ENCODE measurements at regions of chr20 and their contacts with region 1.

Region 1: GRCh38 chr20:38779247-38780097 is 26.0 kb upstream of the PPP1R16B start:
- DNase-seq: no peak
- H3K4me3 ChIP-seq: no peak overlapping the region
- H3K27ac ChIP-seq: no peak overlapping the region
- H3K4me1 ChIP-seq: no peaks in the 10 kb centered on the region
- H3K27me3 ChIP-seq: no peaks in the 10 kb centered on the region
- CTCF ChIP-seq: no peak

Region 2: GRCh38 chr20:38805502-38805957 is 26.1 kb after region 1 on chr20 and contains the start of gene PPP1R16B:
- CTCF ChIA-PET with region 1: no interaction called
- POLR2A ChIA-PET with region 1: interaction called, 23 read pairs
- intact Hi-C with region 1: no loop called
- DNase-seq: peak; percentile 42
- H3K4me3 ChIP-seq: peak within 1 kb of the TSS; percentile 41
- H3K27ac ChIP-seq: no peak within 1 kb of the TSS
- H3K4me1 ChIP-seq: peaks cover 6% of the 10 kb centered on the region
- H3K27me3 ChIP-seq: peaks cover 40% of the 10 kb centered on the region
- CTCF ChIP-seq: no peak
- total RNA-seq, gene PPP1R16B: 0.13 and 0.17 TPM in 2 replicates

Region 3: GRCh38 chr20:38947931-38948362 is 168.5 kb after region 1 on chr20:
- CTCF ChIA-PET with region 1: no interaction called
- POLR2A ChIA-PET with region 1: no interaction called
- intact Hi-C with region 1: no loop called
- DNase-seq: no peak
- H3K4me3 ChIP-seq: no peak overlapping the region
- H3K27ac ChIP-seq: no peak overlapping the region
- H3K4me1 ChIP-seq: no peaks in the 10 kb centered on the region
- H3K27me3 ChIP-seq: no peaks in the 10 kb centered on the region
- CTCF ChIP-seq: no peak

Measured in A673 (cell line).